ENCODE measurements at regions of chr20 and their contacts with region 1.

Region 1: GRCh38 chr20:63009045-63009961 is 2.5 kb upstream of the BHLHE23 start:
- DNase-seq: peak; percentile 90
- ATAC-seq: peak; percentile 52
- H3K4me3 Mint-ChIP-seq: peak overlapping the region; percentile 54
- H3K27ac Mint-ChIP-seq: no peak overlapping the region
- H3K4me1 Mint-ChIP-seq: peaks cover 21% of the 10 kb centered on the region
- H3K27me3 Mint-ChIP-seq: peaks cover 81% of the 10 kb centered on the region
- CTCF ChIP-seq: peak; percentile 79

Region 2: GRCh38 chr20:62953839-62954703 is 55.2 kb before region 1 on chr20:
- CTCF ChIA-PET with region 1: interaction called, 16 read pairs
- POLR2A ChIA-PET with region 1: no interaction called
- DNase-seq: peak; percentile 53
- ATAC-seq: peak; percentile 61
- H3K4me3 Mint-ChIP-seq: peak overlapping the region; percentile 65
- H3K27ac Mint-ChIP-seq: peak overlapping the region; percentile 84
- H3K4me1 Mint-ChIP-seq: peaks cover 17% of the 10 kb centered on the region
- H3K27me3 Mint-ChIP-seq: no peaks in the 10 kb centered on the region
- CTCF ChIP-seq: no peak

Region 3: DNA sequence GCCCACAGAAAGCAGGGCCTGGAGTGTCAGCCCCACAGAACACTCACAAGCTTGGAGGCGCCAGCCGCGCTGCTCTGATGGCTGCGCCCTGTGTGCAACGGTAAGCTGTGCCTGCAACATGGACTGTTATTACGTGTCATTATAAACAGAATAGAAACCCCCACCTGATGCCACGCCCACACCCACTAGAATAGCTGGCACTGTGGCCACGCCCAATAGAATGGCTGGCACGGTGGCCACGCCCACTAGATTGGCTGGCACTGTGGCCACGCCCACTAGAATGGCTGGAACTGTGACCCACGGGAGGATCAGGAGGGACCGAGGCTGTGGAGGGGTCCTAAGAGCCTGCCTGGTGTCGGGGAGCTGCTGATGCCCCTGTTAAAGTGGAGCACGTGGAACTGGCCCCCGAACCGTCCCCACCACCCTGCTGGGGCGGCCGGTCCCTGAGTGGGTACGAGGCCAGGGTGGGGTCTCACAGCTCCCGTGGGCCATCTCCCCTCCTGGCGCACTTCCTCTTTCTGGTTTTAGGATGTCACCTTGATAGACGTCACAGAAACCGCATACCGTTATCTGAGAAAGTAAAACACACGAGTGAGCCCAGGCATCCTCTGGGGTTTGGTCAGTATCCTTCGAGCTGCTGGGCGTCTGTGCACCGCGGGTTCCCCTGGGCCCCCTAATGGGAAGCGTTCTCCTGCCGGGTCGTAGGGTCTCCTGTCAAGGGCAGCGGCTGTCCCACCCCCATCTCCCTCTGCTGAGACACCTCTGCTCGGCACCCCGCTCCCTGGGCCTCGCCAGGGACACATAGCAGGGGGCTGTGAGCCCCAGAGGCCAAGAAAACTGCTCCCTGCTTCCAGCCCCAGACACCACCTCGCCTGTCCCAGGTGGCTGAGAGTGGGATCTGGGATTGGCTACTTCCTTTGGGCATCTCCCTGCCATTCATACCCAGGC is 31.4 kb before region 1 on chr20:
- CTCF ChIA-PET with region 1: interaction called, 21 read pairs
- POLR2A ChIA-PET with region 1: interaction called, 3 read pairs
- DNase-seq: no peak
- ATAC-seq: no peak
- H3K4me3 Mint-ChIP-seq: no peak overlapping the region
- H3K27ac Mint-ChIP-seq: no peak overlapping the region
- H3K4me1 Mint-ChIP-seq: peaks cover 37% of the 10 kb centered on the region
- H3K27me3 Mint-ChIP-seq: peaks cover 35% of the 10 kb centered on the region
- CTCF ChIP-seq: no peak

Region 4: GRCh38 chr20:63025534-63026331 is 16.4 kb after region 1 on chr20:
- CTCF ChIA-PET with region 1: interaction called, 16 read pairs
- POLR2A ChIA-PET with region 1: interaction called, 3 read pairs
- DNase-seq: peak; percentile 22
- ATAC-seq: no peak
- H3K4me3 Mint-ChIP-seq: no peak overlapping the region
- H3K27ac Mint-ChIP-seq: no peak overlapping the region
- H3K4me1 Mint-ChIP-seq: peaks cover 16% of the 10 kb centered on the region
- H3K27me3 Mint-ChIP-seq: peaks cover 4% of the 10 kb centered on the region; the same call in 1 of the 2 replicates
- CTCF ChIP-seq: no peak

Measured in WTC11 (cell line).